Dorsolateral prefrontal cortex (tissue), 120 donors: ENCODE measurements at regions of chr1 and their contacts with region 1.

Region 1: DNA sequence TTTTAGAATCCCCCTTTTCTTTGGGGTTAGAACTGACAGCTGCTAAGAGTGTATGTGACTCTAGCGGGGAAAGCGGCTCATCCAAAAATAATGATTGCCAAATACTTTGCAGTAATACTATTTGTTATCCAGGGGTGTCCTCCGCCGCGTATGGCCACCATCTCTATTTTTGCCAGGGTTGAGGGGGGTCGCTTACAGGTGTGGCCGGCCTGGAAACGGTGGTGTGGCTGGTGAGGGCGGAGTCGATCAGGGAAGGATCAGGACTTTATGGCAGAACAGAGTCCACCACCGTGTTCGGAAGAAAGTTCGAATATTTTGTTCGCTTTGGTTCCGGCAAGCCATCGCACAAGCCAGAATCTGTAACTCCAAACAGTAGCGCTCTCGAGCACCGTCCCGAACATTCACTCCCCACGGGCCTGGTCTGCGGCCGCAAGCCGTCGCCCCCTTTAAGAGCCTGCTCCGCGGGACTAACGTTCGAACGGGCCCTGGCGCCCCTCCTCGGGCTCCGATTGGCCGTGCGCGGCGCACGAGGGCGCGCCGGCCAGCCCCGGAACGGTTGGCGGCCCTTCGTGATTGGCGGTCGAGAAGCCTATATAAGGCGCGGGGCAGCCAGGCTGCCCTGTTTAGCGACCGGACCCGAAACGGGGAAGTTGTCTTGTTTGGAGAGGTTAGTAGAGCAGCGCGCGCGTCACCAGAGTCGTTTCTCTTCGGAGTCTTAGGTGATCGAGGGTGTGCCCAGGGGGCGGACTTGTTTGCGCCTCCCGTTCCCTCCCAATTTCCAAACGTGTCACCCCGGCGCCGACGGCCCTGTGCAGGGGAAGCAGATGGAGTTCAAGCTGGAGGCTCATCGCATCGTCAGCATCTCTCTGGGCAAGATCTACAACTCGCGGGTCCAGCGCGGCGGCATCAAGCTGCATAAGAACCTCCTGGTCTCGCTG is at the start of gene IER5:
- DNase-seq: peak; percentile 91 to 98 (median 96)
- H3K4me3 ChIP-seq: peak within 1 kb of the TSS; percentile 64 to 97 (median 84)
- H3K27ac ChIP-seq: peak within 1 kb of the TSS in 58 of 59 donors; percentile 17 to 94 (median 83)
- H3K27me3 ChIP-seq: no peaks in the 10 kb centered on the region
- CTCF ChIP-seq: peak in 48 of 56 donors; percentile 14 to 64 (median 34)
- total RNA-seq, gene IER5: 8.1 to 74.9 (median 17.6) TPM

Region 2: GRCh38 chr1:180407051-180407450 is 681.3 kb before region 1 on chr1:
- intact Hi-C with region 1: no loop called
- DNase-seq: no peak
- H3K4me3 ChIP-seq: no peak overlapping the region
- H3K27ac ChIP-seq: no peak overlapping the region
- H3K27me3 ChIP-seq: no peaks in the 10 kb centered on the region
- CTCF ChIP-seq: no peak

Region 3: DNA sequence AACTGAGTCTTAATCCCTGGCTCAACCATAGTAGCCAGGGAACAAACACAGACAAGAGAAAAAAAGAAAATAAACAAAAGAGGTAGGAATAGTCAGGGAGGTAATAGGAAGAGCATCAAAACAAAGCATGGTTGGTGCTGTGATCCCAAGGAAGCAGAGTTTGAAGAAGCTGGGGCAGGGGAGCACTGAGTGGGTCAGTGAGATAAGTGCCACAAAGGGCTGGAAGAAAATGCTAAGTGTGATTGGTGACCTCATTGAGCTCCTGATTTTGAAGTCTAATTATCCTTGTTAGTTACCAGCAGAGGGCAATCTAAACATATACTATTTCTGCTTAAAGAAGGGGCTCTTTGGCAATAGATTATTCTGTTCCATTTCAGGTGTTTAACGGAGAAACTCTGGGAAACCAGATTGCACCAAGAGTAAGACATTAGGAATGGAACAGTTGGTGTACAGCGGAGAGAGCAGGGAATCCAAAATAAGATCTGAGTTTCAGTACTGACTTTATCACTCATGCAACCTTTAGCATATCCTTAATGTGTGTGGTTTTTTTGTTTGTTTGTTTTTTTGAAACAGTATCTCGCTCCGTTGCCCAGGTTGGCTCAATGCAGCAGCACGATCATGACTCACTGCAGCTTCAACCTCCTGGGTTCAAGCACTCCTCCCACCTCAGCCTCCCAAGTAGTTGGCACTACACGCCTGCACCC is 206.4 kb before region 1 on chr1:
- intact Hi-C with region 1: loop called in 1 of 2 experiments (anchors 5 kb)
- DNase-seq: no peak
- H3K4me3 ChIP-seq: no peak overlapping the region
- H3K27ac ChIP-seq: peak overlapping the region in 40 of 59 donors; percentile 1 to 77 (median 47)
- H3K27me3 ChIP-seq: no peaks in the 10 kb centered on the region
- CTCF ChIP-seq: peak in 55 of 56 donors; percentile 53 to 89 (median 71)

Region 4: DNA sequence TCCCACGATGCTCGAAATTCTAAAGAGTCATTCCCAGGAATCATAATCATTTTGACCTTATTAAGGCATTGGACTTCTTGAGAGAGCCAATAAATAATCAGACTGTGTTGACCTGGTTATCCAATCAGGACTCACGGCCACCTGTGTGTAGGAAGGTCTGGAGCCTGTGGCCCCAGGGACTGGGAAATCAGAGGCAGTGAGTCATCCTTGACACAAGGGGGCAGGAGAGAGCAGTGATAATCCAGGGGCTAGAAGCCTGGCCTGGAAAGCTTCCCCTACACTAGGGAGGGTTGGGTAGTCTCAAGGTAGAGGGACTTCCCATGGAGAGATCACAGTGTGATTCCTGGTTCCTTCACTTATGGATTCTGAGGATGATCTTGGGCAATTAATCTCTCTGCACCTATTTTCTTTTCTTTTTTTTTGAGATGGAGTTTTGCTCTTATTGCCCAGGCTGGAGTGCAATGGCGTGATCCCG is 49.9 kb before region 1 on chr1:
- intact Hi-C with region 1: loop called (anchors 2 to 5 kb)
- DNase-seq: peak in 5 of 10 donors; percentile 27 to 68 (median 43)
- H3K4me3 ChIP-seq: no peak overlapping the region
- H3K27ac ChIP-seq: no peak overlapping the region
- H3K27me3 ChIP-seq: no peaks in the 10 kb centered on the region
- CTCF ChIP-seq: peak; percentile 39 to 83 (median 74)

Region 5: GRCh38 chr1:181105134-181106021 is 17.0 kb after region 1 on chr1:
- intact Hi-C with region 1: loop called in 1 of 2 experiments (anchors 1 kb)
- DNase-seq: peak; percentile 80 to 95 (median 89)
- H3K4me3 ChIP-seq: peak overlapping the region; percentile 58 to 92 (median 81)
- H3K27ac ChIP-seq: peak overlapping the region in 58 of 59 donors; percentile 63 to 97 (median 92)
- H3K27me3 ChIP-seq: no peaks in the 10 kb centered on the region
- CTCF ChIP-seq: peak in 7 of 56 donors; percentile 7 to 20 (median 9)